Calu3 (cell line): ENCODE measurements at regions of chr5 and their contacts with region 1.

Region 1: GRCh38 chr5:126754609-126755008 is 22.3 kb upstream of the LMNB1 start:
- DNase-seq: no peak
- H3K4me3 Mint-ChIP-seq: no peak overlapping the region
- H3K27ac Mint-ChIP-seq: no peak overlapping the region
- H3K4me1 Mint-ChIP-seq: peaks cover 5% of the 10 kb centered on the region
- H3K27me3 Mint-ChIP-seq: no peaks in the 10 kb centered on the region
- CTCF ChIP-seq: no peak

Region 2: GRCh38 chr5:126300293-126300692 is 454.3 kb before region 1 on chr5:
- CTCF ChIA-PET with region 1: no interaction called
- intact Hi-C with region 1: no loop called
- DNase-seq: no peak
- H3K4me3 Mint-ChIP-seq: no peak overlapping the region
- H3K27ac Mint-ChIP-seq: no peak overlapping the region
- H3K4me1 Mint-ChIP-seq: no peaks in the 10 kb centered on the region
- H3K27me3 Mint-ChIP-seq: no peaks in the 10 kb centered on the region
- CTCF ChIP-seq: no peak

Region 3: GRCh38 chr5:126715765-126716164 is 38.8 kb before region 1 on chr5:
- CTCF ChIA-PET with region 1: interaction called, 11 read pairs
- intact Hi-C with region 1: no loop called
- DNase-seq: no peak
- H3K4me3 Mint-ChIP-seq: no peak overlapping the region
- H3K27ac Mint-ChIP-seq: no peak overlapping the region
- H3K4me1 Mint-ChIP-seq: no peaks in the 10 kb centered on the region
- H3K27me3 Mint-ChIP-seq: no peaks in the 10 kb centered on the region
- CTCF ChIP-seq: no peak

Region 4: DNA sequence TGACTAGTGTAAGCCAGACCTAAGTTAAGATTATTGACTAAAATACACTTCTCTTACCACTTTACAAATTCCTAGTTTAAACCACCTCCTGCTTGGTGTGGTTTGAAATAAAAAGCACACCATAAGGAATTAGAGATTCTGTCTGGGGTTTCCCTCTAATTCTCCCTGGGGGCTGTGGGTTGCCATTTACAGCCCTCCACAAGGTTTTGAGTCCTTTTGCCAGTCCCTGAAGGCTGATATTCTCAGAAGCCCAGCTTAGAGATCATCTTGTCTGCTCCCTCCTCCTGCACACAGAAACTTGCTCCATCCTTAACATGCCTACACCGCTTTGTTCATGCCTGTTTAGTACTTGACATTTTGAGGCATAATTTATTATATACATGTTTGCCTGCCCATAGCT is 15.1 kb after region 1 on chr5:
- CTCF ChIA-PET with region 1: no interaction called
- intact Hi-C with region 1: no loop called
- DNase-seq: no peak
- H3K4me3 Mint-ChIP-seq: no peak overlapping the region
- H3K27ac Mint-ChIP-seq: no peak overlapping the region
- H3K4me1 Mint-ChIP-seq: no peaks in the 10 kb centered on the region
- H3K27me3 Mint-ChIP-seq: no peaks in the 10 kb centered on the region
- CTCF ChIP-seq: no peak